Activated naive CD4-positive, alpha-beta T cell treated with anti-CD3 and anti-CD28 coated beads, Interleukin-2, amount 10 ng/mL, durations not matched to agents 7 days and 5 days (primary cell): ENCODE measurements at regions of chr3 and their contacts with region 1.

Region 1: GRCh38 chr3:141266797-141267555 is 35.4 kb downstream of the PXYLP1 start:
- DNase-seq: peak; percentile 67
- H3K4me3 Mint-ChIP-seq: peak overlapping the region; percentile 72
- H3K27ac Mint-ChIP-seq: peak overlapping the region; percentile 96
- H3K4me1 Mint-ChIP-seq: peaks cover 42% of the 10 kb centered on the region
- H3K27me3 Mint-ChIP-seq: no peaks in the 10 kb centered on the region

Region 2: GRCh38 chr3:140870370-140870769 is 396.6 kb before region 1 on chr3:
- CTCF ChIA-PET with region 1: no interaction called
- DNase-seq: no peak
- H3K4me3 Mint-ChIP-seq: no peak overlapping the region
- H3K27ac Mint-ChIP-seq: no peak overlapping the region
- H3K4me1 Mint-ChIP-seq: no peaks in the 10 kb centered on the region
- H3K27me3 Mint-ChIP-seq: peaks cover 7% of the 10 kb centered on the region

Region 3: DNA sequence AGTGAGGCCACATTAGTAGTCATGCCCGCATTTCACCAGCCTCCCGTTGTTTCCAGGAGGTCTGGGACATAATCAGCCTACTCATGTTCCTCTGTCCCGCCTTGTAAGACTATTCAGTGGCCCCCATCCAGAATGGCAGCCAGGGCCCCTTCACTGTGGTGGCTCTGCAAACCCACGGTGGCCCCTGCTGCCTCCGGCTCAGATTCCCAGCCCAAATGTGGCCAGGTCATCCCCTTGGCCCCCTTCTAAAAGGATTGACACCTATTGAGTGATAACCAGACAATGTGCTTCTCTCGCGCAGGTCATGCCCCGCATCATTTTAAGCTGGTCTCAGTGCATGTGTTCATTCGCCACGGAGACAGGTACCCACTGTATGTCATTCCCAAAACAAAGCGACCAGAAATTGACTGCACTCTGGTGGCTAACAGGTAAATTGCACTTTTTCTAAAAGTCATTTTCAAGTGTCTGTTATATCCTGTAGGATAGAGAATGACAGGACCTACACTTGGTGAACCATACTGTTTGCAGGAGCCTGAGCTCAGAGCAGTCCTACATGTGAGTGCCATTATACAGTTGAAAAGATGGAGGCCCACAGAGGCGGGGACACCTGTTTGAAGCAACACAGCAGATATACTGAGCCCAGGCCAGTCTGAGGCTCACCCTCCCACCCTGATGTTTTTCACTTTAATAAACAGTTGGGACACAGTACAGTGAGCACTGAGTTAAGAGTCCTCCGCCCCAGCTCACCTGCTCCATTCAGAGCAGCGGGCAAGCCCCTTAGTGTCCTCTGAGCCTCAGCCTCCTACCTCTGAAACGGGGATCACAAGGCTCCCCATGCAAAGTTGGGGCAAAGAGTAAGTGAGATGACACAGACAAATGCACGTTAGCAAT is 12.3 kb after region 1 on chr3:
- CTCF ChIA-PET with region 1: interaction called, 13 read pairs
- DNase-seq: no peak
- H3K4me3 Mint-ChIP-seq: no peak overlapping the region
- H3K27ac Mint-ChIP-seq: no peak overlapping the region
- H3K4me1 Mint-ChIP-seq: peaks cover 21% of the 10 kb centered on the region
- H3K27me3 Mint-ChIP-seq: no peaks in the 10 kb centered on the region